ENCODE measurements at regions of chr12 and their contacts with region 1.

Region 1: GRCh38 chr12:68497702-68498101 is 113.0 kb upstream of the RAP1B start:
- DNase-seq: peak; percentile 69
- H3K4me3 Mint-ChIP-seq: peak overlapping the region; percentile 66
- H3K27ac Mint-ChIP-seq: peak overlapping the region; percentile 89
- H3K4me1 Mint-ChIP-seq: peaks cover 34% of the 10 kb centered on the region
- H3K27me3 Mint-ChIP-seq: no peaks in the 10 kb centered on the region

Region 2: GRCh38 chr12:67853204-67853603 is 644.5 kb before region 1 on chr12:
- intact Hi-C with region 1: no loop called
- DNase-seq: no peak
- H3K4me3 Mint-ChIP-seq: no peak overlapping the region
- H3K27ac Mint-ChIP-seq: no peak overlapping the region
- H3K4me1 Mint-ChIP-seq: no peaks in the 10 kb centered on the region
- H3K27me3 Mint-ChIP-seq: peaks cover 6% of the 10 kb centered on the region

Region 3: DNA sequence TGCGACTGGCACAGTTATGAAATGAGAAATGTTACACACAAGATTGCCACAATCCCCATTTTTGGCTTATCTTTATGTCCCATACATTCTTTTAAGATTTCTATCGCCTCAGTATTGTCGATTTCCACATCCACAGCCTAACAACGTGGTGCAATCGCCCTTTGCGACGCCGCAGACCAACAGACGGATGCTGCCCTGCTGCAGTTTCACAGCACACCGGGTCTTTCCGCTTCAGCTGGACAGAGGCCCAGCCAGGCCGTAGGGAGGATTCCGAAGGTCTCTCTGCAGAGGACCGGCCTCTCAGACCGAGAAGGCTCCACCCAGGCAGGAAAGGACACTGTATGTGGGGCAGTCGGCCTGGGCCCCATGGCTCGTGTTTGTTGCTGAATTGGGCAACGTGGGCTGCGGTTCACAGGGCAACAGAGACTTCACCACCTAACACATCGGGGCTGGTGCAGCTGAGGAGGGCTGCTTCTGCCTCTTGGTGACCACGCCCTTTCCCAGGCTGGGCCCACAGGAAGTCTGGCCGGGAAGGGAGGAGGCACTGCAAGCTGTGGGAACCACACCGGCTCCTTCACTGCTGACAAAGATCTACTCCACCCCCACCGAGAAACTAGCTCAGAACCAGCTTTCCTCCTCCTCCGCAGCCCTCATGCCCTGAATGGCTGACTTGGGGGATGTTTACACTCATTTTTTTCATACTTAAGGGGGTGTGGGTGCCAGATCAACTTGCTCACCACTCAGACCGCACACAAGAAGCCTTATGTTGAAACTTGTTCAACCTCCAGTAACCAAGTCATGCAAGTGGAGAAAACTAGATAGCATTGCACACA is 132.6 kb before region 1 on chr12:
- intact Hi-C with region 1: loop called (anchors 1 kb)
- DNase-seq: peak; percentile 95
- H3K4me3 Mint-ChIP-seq: peak overlapping the region; percentile 83
- H3K27ac Mint-ChIP-seq: peak overlapping the region; percentile 95
- H3K4me1 Mint-ChIP-seq: peaks cover 56% of the 10 kb centered on the region
- H3K27me3 Mint-ChIP-seq: no peaks in the 10 kb centered on the region

Region 4: GRCh38 chr12:68374307-68374982 is 123.3 kb before region 1 on chr12:
- intact Hi-C with region 1: loop called (anchors 1 kb)
- DNase-seq: peak; percentile 87
- H3K4me3 Mint-ChIP-seq: peak overlapping the region; percentile 68
- H3K27ac Mint-ChIP-seq: peak overlapping the region; percentile 90
- H3K4me1 Mint-ChIP-seq: peaks cover 41% of the 10 kb centered on the region
- H3K27me3 Mint-ChIP-seq: no peaks in the 10 kb centered on the region

Region 5: GRCh38 chr12:68538726-68539614 is 41.3 kb after region 1 on chr12:
- intact Hi-C with region 1: loop called (anchors 2 kb)
- DNase-seq: peak; percentile 90
- H3K4me3 Mint-ChIP-seq: peak overlapping the region; percentile 57
- H3K27ac Mint-ChIP-seq: peak overlapping the region; percentile 40
- H3K4me1 Mint-ChIP-seq: peaks cover 35% of the 10 kb centered on the region
- H3K27me3 Mint-ChIP-seq: no peaks in the 10 kb centered on the region

Region 6: DNA sequence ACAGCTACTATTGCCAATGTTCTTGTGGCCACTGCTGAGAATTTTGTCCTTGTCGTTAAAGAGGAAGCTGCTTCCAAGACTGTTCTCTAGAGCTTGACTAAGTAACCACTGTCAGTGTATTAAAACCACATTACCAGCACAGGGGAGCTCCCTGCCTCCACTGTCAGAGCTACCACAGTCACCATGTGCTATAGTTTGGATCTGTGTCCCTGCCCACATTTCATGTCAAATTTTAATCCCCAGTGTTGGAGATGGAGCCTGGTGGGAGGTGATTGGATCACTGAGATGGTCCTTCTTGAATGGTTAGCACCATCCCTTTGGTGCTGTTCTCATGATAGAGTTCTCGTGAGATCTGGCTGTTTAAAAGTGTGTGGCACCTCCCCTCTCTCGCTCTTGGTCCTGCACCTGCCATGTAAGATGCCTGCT is 89.8 kb after region 1 on chr12:
- intact Hi-C with region 1: loop called (anchors 2 kb)
- DNase-seq: peak; percentile 84
- H3K4me3 Mint-ChIP-seq: peak overlapping the region; percentile 16
- H3K27ac Mint-ChIP-seq: peak overlapping the region; percentile 74
- H3K4me1 Mint-ChIP-seq: peaks cover 36% of the 10 kb centered on the region
- H3K27me3 Mint-ChIP-seq: no peaks in the 10 kb centered on the region

Region 7: DNA sequence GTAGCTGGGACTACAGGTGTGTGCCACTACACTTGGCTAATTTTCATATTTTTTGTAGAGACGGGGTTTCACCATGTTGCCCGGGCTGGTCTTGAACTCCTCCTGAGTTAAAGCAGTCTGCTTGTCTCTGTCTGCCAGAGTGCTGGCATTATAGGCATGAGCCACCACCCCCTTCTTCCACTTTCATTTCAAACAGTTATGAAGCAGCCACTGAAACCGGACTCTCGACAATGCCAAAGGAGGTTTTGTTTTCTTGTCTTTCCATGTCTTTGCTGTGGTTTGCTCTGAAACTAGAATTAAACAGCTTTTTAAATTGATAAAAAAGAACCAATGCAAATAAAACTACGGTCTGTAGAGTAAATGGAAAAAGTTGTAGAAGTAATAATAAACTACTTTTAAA is 143.4 kb after region 1 on chr12:
- intact Hi-C with region 1: loop called (anchors 10 kb)
- DNase-seq: peak; percentile 86
- H3K4me3 Mint-ChIP-seq: peak overlapping the region; percentile 64
- H3K27ac Mint-ChIP-seq: peak overlapping the region; percentile 60
- H3K4me1 Mint-ChIP-seq: peaks cover 48% of the 10 kb centered on the region
- H3K27me3 Mint-ChIP-seq: no peaks in the 10 kb centered on the region

Region 8: DNA sequence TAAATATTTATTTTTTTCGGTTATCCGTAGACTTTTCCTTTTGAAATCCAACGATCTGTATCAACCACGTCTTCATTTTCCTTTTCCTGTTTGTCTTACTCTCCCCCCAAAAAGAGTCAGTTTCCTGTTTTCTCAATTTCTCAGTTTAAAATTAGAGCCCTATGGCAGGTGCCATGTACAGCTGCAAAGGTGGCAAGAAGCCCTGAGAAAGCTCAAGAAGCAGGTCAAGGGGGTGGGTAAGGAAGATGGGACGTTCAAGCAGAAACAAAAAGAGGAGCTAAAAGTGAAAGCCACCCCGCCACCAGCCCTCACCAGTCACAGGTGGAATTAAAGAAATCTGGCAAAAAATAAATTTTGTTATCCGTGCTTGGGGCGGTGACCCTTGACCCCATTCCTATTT is 275.0 kb after region 1 on chr12:
- intact Hi-C with region 1: no loop called
- DNase-seq: no peak
- H3K4me3 Mint-ChIP-seq: peak overlapping the region; percentile 58
- H3K27ac Mint-ChIP-seq: peak overlapping the region; percentile 5
- H3K4me1 Mint-ChIP-seq: peaks cover 13% of the 10 kb centered on the region
- H3K27me3 Mint-ChIP-seq: no peaks in the 10 kb centered on the region

Measured in activated CD4-positive, alpha-beta T cell treated with anti-CD3 and anti-CD28 coated beads, Interleukin-2, amount 10 ng/mL, durations not matched to agents 24 days and 14 days (primary cell).